CD4-positive, alpha-beta T cell (primary cell): ENCODE measurements at regions of chr2 and their contacts with region 1.

Region 1: GRCh38 chr2:221423210-221423786 is 148.8 kb downstream of the EPHA4 start:
- DNase-seq: no peak
- ATAC-seq: no peak
- H3K4me3 ChIP-seq: no peak overlapping the region
- H3K4me3 Mint-ChIP-seq: no peak overlapping the region
- H3K27ac ChIP-seq: no peak overlapping the region
- H3K27ac Mint-ChIP-seq: no peak overlapping the region
- H3K4me1 ChIP-seq: peaks cover 18% of the 10 kb centered on the region
- H3K4me1 Mint-ChIP-seq: peaks cover 30% of the 10 kb centered on the region
- H3K27me3 ChIP-seq: no peaks in the 10 kb centered on the region
- H3K27me3 Mint-ChIP-seq: no peaks in the 10 kb centered on the region
- CTCF ChIP-seq: no peak

Region 2: DNA sequence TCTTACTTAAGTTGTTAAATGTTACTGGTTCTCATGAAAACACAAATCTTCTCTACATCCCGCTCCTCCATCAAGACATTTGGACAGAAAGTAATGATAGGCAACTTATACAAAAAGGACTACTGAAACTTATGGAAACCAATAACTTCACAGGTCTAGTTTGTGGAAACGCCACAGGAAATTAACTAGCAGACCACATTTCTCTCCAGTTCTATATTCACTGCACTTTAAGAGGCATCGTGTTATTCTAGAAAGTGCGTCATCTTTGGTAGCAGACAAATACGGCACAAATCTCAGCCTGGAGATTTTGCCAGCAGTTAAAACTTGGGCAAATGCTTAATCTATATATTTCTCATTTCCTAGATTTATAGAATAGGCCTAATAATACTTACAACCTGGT is 15.5 kb before region 1 on chr2:
- CTCF ChIA-PET with region 1: no interaction called
- POLR2A ChIA-PET with region 1: no interaction called
- intact Hi-C with region 1: no loop called
- DNase-seq: no peak
- ATAC-seq: no peak
- H3K4me3 ChIP-seq: no peak overlapping the region
- H3K4me3 Mint-ChIP-seq: no peak overlapping the region
- H3K27ac ChIP-seq: no peak overlapping the region
- H3K27ac Mint-ChIP-seq: no peak overlapping the region
- H3K4me1 ChIP-seq: no peaks in the 10 kb centered on the region
- H3K4me1 Mint-ChIP-seq: no peaks in the 10 kb centered on the region
- H3K27me3 ChIP-seq: no peaks in the 10 kb centered on the region
- H3K27me3 Mint-ChIP-seq: no peaks in the 10 kb centered on the region
- CTCF ChIP-seq: no peak

Region 3: DNA sequence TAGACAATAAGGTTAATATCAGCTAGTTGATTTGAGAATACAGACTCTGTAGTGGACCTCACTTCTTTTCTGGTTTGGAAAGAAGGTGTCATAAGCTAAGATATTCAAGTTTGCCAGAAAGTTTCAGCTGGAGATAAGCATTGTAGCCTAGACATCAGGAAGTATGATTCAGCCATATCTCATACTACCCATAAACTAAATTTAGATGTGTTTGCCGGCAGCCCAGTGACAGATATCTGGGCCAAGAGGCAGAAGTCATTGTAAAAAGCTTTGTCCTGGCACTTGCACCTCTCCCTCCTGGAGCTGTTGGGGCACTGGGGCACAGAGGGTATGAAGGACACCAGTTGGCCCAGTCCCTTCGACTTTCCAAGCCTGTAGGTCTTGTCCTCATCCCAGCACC is 20.8 kb after region 1 on chr2:
- CTCF ChIA-PET with region 1: no interaction called
- POLR2A ChIA-PET with region 1: no interaction called
- intact Hi-C with region 1: loop called in 1 of 2 experiments (anchors 1 kb)
- DNase-seq: no peak
- ATAC-seq: no peak
- H3K4me3 ChIP-seq: no peak overlapping the region
- H3K4me3 Mint-ChIP-seq: no peak overlapping the region
- H3K27ac ChIP-seq: no peak overlapping the region
- H3K27ac Mint-ChIP-seq: no peak overlapping the region
- H3K4me1 ChIP-seq: no peaks in the 10 kb centered on the region
- H3K4me1 Mint-ChIP-seq: no peaks in the 10 kb centered on the region
- H3K27me3 ChIP-seq: no peaks in the 10 kb centered on the region
- H3K27me3 Mint-ChIP-seq: no peaks in the 10 kb centered on the region
- CTCF ChIP-seq: no peak